Mammary epithelial cell (primary cell): ENCODE measurements at regions of chr6 and their contacts with region 1.

Region 1: GRCh38 chr6:69791065-69791471 is 5.7 kb downstream of the LMBRD1 start:
- DNase-seq: peak; percentile 48
- H3K4me3 ChIP-seq: no peak overlapping the region
- H3K27ac ChIP-seq: peak overlapping the region; percentile 12
- H3K4me1 ChIP-seq: peaks cover 19% of the 10 kb centered on the region
- H3K27me3 ChIP-seq: no peaks in the 10 kb centered on the region
- CTCF ChIP-seq: no peak

Region 2: DNA sequence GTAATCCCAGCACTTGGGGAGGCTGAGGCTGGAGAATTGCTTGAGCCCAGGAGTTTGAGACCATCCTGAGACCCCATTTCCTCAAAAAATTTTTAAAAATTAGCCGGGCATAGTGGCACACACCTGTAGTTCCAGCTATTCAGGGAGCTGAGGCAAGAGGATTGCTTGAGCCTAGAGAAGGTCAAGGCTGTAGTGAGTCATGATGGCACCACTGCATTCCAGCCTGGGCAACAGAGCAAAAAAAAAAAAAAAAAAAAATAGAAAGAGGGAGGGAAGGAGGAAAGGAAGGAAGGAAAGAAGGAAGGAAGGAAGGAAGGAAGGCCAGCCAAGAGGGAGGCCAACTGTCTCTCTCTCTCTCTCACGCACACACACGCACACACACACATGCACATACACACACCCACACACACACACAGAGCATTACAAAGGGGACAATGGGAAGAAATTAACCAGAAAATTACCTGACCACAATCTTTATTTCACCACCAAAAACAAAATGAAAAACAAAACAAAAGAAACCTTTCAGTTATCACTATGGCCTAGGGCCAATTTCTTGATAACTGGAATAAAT is 562.4 kb after region 1 on chr6:
- CTCF ChIA-PET with region 1: interaction called, 15 read pairs
- dilution Hi-C with region 1: no loop called
- in situ Hi-C with region 1: no loop called
- intact Hi-C with region 1: no loop called
- DNase-seq: peak; percentile 34
- H3K4me3 ChIP-seq: no peak overlapping the region
- H3K27ac ChIP-seq: no peak overlapping the region
- H3K4me1 ChIP-seq: no peaks in the 10 kb centered on the region
- H3K27me3 ChIP-seq: peaks cover 29% of the 10 kb centered on the region
- CTCF ChIP-seq: no peak